ENCODE measurements at regions of chr15 and their contacts with region 1.

Region 1: GRCh38 chr15:51077221-51078153 is 17.2 kb downstream of the TNFAIP8L3 start:
- DNase-seq: peak; percentile 61
- H3K4me3 ChIP-seq: no peak overlapping the region
- H3K27ac ChIP-seq: no peak overlapping the region
- H3K4me1 ChIP-seq: no peaks in the 10 kb centered on the region
- H3K27me3 ChIP-seq: no peaks in the 10 kb centered on the region
- CTCF ChIP-seq: no peak

Region 2: GRCh38 chr15:50463423-50464358 is 613.8 kb before region 1 on chr15:
- CTCF ChIA-PET with region 1: no interaction called
- POLR2A ChIA-PET with region 1: no interaction called
- intact Hi-C with region 1: no loop called
- DNase-seq: no peak
- H3K4me3 ChIP-seq: no peak overlapping the region
- H3K27ac ChIP-seq: no peak overlapping the region
- H3K4me1 ChIP-seq: no peaks in the 10 kb centered on the region
- H3K27me3 ChIP-seq: no peaks in the 10 kb centered on the region
- CTCF ChIP-seq: no peak

Region 3: DNA sequence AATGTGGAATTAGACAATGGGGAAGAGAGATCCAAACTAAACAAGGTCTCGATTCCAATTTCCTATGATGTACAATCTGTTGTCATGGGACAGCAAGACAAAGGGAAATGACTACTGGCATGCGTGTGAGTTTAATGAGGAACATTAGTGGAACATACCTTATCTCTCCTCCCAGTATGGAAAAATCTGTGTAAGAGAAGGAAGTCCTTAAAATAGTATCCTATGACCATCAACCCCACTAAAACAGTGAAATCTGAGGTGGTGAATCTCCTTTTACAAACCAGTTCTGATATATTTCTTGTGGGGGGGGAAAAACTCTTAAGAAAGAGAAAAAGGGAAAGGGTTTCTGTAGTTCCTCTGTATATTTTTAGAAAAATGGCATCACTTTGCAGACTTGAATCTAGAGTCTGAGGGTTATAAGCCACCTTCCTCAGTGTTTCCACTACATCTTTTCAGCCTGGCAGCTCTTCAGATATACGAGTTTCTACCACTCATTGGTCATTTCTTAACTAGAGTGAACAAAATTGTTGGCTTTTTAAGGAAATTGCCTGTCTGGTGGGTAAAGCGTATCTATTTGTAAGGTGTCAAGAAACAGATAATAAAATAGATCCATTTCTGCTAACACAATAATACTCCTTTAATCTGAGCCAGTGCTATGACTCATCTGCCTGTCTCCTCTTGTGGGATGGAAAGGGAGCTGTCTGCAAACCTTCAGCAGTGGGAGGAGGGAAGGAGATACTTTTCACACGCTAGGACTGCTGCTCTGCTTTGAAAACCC is 20.3 kb after region 1 on chr15:
- CTCF ChIA-PET with region 1: no interaction called
- POLR2A ChIA-PET with region 1: no interaction called
- intact Hi-C with region 1: loop called (anchors 2 kb)
- DNase-seq: peak; percentile 50
- H3K4me3 ChIP-seq: no peak overlapping the region
- H3K27ac ChIP-seq: no peak overlapping the region
- H3K4me1 ChIP-seq: peaks cover 8% of the 10 kb centered on the region
- H3K27me3 ChIP-seq: peaks cover 67% of the 10 kb centered on the region
- CTCF ChIP-seq: no peak

Region 4: GRCh38 chr15:51260212-51260611 is 182.7 kb after region 1 on chr15:
- CTCF ChIA-PET with region 1: no interaction called
- POLR2A ChIA-PET with region 1: no interaction called
- intact Hi-C with region 1: no loop called
- DNase-seq: no peak
- H3K4me3 ChIP-seq: no peak overlapping the region
- H3K27ac ChIP-seq: no peak overlapping the region
- H3K4me1 ChIP-seq: no peaks in the 10 kb centered on the region
- H3K27me3 ChIP-seq: peaks cover 13% of the 10 kb centered on the region
- CTCF ChIP-seq: no peak